GM12878 (cell line): ENCODE measurements at regions of chr19 and their contacts with region 1.

Region 1: DNA sequence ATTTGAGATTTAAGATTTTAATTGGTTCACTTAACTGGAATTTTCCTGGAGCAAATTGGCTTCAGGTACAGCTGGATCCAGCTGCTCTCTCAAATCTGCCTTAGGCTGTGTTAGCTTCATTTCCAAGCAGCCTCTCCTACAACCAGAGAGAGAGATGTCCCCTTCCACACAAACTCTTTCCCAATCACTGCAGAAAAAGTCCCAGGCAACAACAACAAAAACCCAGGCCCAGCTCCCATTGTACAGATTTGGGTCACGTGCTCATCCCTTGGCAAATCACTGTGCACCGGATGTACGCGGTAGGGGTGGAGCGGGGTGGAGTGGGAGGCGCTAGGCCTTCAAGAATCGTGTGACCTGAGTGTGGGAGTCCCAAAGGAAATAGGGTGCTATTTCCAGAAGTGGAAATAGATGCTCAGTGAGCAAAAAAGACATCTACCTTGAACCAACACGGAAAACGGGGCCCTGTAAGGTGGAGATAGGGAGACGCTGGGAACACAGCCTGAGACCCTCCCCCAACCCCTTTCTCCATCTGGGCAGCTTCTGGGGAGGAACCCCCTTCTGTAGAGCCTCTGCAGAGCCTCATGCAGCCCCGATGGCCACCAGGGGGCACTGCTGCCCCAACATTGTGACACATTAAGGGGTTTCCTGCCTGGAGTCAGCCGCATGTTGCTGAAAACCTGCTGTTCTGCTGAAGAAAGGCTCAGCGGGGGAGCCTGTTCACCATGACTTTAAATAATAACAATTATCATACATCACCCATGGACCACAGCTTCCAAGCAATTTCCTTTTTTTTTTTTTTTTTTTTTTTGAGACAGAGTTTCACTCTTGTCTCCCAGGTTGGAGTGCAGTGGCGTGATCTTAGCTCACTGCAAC is 25.4 kb downstream of the HPN start:
- DNase-seq: peak; percentile 70
- ATAC-seq: peak; percentile 99
- H3K4me3 ChIP-seq: no peak overlapping the region
- H3K27ac ChIP-seq: no peak overlapping the region
- H3K4me1 ChIP-seq: peaks cover 4% of the 10 kb centered on the region; the same call in 1 of the 2 replicates
- H3K27me3 ChIP-seq: no peaks in the 10 kb centered on the region
- CTCF ChIP-seq: peak; percentile 81 to 93 (median 89)
- EP300 ChIP-seq: no peak
- POLR2A ChIP-seq: no peak
- RAD21 ChIP-seq: peak; percentile 94

Region 2: GRCh38 chr19:35044317-35045117 is 22.4 kb before region 1 on chr19:
- CTCF ChIA-PET with region 1: interaction called, 28 read pairs
- POLR2A ChIA-PET with region 1: no interaction called
- RAD21 ChIA-PET with region 1: interaction called, 7 read pairs
- SMC1A ChIA-PET with region 1: interaction called, 3 read pairs
- in situ Hi-C with region 1: no loop called
- intact Hi-C with region 1: no loop called
- DNase-seq: no peak
- ATAC-seq: peak; percentile 31; the same call in 1 of the 3 replicates
- H3K4me3 ChIP-seq: no peak overlapping the region
- H3K27ac ChIP-seq: no peak overlapping the region
- H3K4me1 ChIP-seq: peaks cover 4% of the 10 kb centered on the region; the same call in 1 of the 2 replicates
- H3K27me3 ChIP-seq: peaks cover 0 to 2% of the 10 kb centered on the region in 2 experiments; a peak in 3 of 4 replicates
- CTCF ChIP-seq: peak; percentile 80 to 93 (median 90)
- EP300 ChIP-seq: no peak
- POLR2A ChIP-seq: no peak
- RAD21 ChIP-seq: peak; percentile 54

Region 3: GRCh38 chr19:35055715-35056179 is 11.2 kb before region 1 on chr19:
- CTCF ChIA-PET with region 1: interaction called, 13 read pairs
- POLR2A ChIA-PET with region 1: no interaction called
- RAD21 ChIA-PET with region 1: no interaction called
- SMC1A ChIA-PET with region 1: interaction called, 4 read pairs
- in situ Hi-C with region 1: no loop called
- intact Hi-C with region 1: no loop called
- DNase-seq: no peak
- ATAC-seq: peak; percentile 79
- H3K4me3 ChIP-seq: no peak overlapping the region
- H3K27ac ChIP-seq: no peak overlapping the region
- H3K4me1 ChIP-seq: no peaks in the 10 kb centered on the region
- H3K27me3 ChIP-seq: no peaks in the 10 kb centered on the region; a peak in 1 of 4 replicates
- CTCF ChIP-seq: peak; percentile 39 to 56 (median 44); a peak in 4 of 6 replicates
- EP300 ChIP-seq: no peak
- POLR2A ChIP-seq: no peak
- RAD21 ChIP-seq: peak; percentile 16; the same call in 1 of the 2 replicates

Region 4: GRCh38 chr19:35080613-35081170 is 13.8 kb after region 1 on chr19:
- CTCF ChIA-PET with region 1: interaction called, 66 read pairs
- POLR2A ChIA-PET with region 1: no interaction called
- RAD21 ChIA-PET with region 1: interaction called, 26 read pairs
- SMC1A ChIA-PET with region 1: interaction called, 31 read pairs
- in situ Hi-C with region 1: no loop called
- intact Hi-C with region 1: no loop called
- DNase-seq: no peak
- ATAC-seq: no peak
- H3K4me3 ChIP-seq: no peak overlapping the region
- H3K27ac ChIP-seq: no peak overlapping the region
- H3K4me1 ChIP-seq: peaks cover 9% of the 10 kb centered on the region
- H3K27me3 ChIP-seq: no peaks in the 10 kb centered on the region; a peak in 1 of 4 replicates
- CTCF ChIP-seq: no peak
- EP300 ChIP-seq: no peak
- POLR2A ChIP-seq: no peak
- RAD21 ChIP-seq: no peak

Region 5: DNA sequence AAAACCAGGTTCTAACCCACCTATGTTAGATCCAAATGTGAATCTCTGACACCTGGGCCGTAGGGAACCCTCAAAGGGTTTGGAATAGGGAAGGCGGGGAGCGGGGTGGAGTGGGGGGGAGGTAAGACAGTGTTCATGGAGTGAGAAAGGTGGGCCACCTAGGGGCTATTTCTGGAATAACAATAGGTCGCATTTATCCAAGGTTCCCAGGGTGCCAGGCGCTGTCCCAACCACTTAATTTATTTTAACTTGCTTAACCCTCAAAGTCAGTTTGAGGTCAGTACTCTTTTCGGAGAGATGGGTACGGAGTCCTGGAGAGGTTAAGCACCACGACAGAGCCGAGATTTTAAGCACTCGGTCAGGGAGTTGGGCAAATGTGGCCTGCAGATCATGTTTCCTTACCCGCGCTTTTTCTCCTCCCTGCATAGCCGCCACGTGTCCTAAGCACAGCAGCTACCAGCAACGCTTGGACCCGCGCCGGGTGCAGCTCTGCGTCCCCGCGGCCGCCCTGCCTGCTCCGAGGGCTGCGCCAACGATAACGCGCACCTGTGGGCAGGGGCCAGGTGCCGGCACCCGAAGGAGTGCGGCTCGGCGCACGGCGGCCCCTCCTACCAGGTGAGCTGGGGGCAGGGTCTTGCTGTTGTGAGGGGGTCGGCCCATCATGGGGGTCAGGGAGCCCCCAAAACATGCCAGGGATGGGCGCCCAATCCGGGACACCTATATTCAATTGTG is 23.7 kb after region 1 on chr19:
- CTCF ChIA-PET with region 1: interaction called, 66 read pairs
- POLR2A ChIA-PET with region 1: interaction called, 4 read pairs
- RAD21 ChIA-PET with region 1: interaction called, 26 read pairs
- SMC1A ChIA-PET with region 1: interaction called, 31 read pairs
- in situ Hi-C with region 1: no loop called
- intact Hi-C with region 1: loop called (anchors 1 kb)
- DNase-seq: no peak
- ATAC-seq: peak; percentile 90
- H3K4me3 ChIP-seq: no peak overlapping the region
- H3K27ac ChIP-seq: no peak overlapping the region
- H3K4me1 ChIP-seq: peaks cover 12% of the 10 kb centered on the region
- H3K27me3 ChIP-seq: no peaks in the 10 kb centered on the region; a peak in 1 of 4 replicates
- CTCF ChIP-seq: peak; percentile 55 to 59 (median 56)
- EP300 ChIP-seq: no peak
- POLR2A ChIP-seq: no peak
- RAD21 ChIP-seq: peak; percentile 62

Region 6: DNA sequence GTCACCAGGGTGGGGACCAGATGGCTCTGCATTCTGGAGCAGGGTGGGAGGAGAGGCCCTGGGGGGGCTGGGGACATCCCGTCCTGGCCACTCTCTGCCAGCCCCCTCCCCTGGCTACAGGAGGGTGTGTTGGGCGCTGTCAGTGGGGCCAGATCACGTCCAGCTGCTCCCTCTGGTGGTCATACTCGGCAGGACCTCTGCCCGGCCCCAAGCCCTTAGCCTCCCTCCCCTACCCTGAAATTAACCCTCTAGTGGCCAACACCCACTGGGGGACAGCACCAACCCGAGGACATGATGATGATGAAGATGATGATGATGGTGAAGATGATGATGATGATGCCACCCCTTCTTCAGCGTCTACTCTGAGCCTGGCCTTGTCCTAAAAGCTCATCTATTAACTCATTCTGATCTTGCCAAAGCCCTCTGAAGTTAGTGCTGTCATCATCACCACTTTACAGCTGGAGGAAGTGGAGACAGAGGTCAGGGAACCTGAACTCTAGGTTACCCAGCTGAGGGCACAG is 68.5 kb after region 1 on chr19:
- CTCF ChIA-PET with region 1: interaction called, 71 read pairs
- POLR2A ChIA-PET with region 1: interaction called, 3 read pairs
- RAD21 ChIA-PET with region 1: interaction called, 30 read pairs
- SMC1A ChIA-PET with region 1: interaction called, 30 read pairs
- in situ Hi-C with region 1: loop called (anchors 5 kb)
- intact Hi-C with region 1: loop called (anchors 1 kb)
- DNase-seq: no peak
- ATAC-seq: peak; percentile 97
- H3K4me3 ChIP-seq: no peak overlapping the region
- H3K27ac ChIP-seq: no peak overlapping the region
- H3K4me1 ChIP-seq: peaks cover 4% of the 10 kb centered on the region; the same call in 1 of the 2 replicates
- H3K27me3 ChIP-seq: no peaks in the 10 kb centered on the region
- CTCF ChIP-seq: peak; percentile 78 to 92 (median 84)
- EP300 ChIP-seq: no peak
- POLR2A ChIP-seq: no peak
- RAD21 ChIP-seq: peak; percentile 51

Region 7: DNA sequence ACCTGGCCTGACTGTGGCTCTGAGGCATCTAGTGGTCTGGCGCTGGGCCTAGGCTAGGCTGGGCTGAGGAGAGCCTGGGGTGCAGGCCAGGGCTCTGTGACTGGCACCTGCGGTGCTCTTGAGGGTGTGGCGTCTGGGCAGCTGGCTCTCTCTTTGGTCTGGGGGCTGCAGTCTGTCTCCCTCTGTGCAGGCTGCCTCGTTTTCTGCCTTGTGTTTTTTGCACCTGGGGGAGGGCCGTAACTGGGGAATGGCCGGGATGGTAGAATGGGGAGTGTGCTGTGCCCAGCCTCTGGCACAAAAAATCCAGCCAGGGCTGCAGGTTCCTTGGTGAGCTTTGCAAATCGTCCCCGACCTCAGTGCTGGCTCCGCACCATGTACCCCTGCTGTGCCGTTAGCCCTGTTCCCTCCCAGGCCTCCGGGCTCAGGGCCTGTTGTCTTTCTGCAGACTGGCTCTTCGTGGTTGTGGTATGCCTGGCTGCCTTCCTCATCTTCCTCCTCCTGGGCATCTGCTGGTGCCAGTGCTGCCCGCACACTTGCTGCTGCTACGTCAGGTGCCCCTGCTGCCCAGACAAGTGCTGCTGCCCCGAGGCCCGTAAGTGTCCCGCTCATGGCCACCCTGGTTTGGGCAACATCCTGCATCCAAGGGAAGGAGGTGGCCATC is 195.3 kb after region 1 on chr19:
- CTCF ChIA-PET with region 1: no interaction called
- POLR2A ChIA-PET with region 1: no interaction called
- RAD21 ChIA-PET with region 1: no interaction called
- SMC1A ChIA-PET with region 1: no interaction called
- in situ Hi-C with region 1: no loop called
- intact Hi-C with region 1: no loop called
- DNase-seq: no peak
- ATAC-seq: no peak
- H3K4me3 ChIP-seq: no peak overlapping the region
- H3K27ac ChIP-seq: no peak overlapping the region
- H3K4me1 ChIP-seq: no peaks in the 10 kb centered on the region
- H3K27me3 ChIP-seq: no peaks in the 10 kb centered on the region
- CTCF ChIP-seq: no peak
- EP300 ChIP-seq: no peak
- POLR2A ChIP-seq: peak; percentile 56
- RAD21 ChIP-seq: no peak